ENCODE measurements at regions of chr12 and their contacts with region 1.

Region 1: DNA sequence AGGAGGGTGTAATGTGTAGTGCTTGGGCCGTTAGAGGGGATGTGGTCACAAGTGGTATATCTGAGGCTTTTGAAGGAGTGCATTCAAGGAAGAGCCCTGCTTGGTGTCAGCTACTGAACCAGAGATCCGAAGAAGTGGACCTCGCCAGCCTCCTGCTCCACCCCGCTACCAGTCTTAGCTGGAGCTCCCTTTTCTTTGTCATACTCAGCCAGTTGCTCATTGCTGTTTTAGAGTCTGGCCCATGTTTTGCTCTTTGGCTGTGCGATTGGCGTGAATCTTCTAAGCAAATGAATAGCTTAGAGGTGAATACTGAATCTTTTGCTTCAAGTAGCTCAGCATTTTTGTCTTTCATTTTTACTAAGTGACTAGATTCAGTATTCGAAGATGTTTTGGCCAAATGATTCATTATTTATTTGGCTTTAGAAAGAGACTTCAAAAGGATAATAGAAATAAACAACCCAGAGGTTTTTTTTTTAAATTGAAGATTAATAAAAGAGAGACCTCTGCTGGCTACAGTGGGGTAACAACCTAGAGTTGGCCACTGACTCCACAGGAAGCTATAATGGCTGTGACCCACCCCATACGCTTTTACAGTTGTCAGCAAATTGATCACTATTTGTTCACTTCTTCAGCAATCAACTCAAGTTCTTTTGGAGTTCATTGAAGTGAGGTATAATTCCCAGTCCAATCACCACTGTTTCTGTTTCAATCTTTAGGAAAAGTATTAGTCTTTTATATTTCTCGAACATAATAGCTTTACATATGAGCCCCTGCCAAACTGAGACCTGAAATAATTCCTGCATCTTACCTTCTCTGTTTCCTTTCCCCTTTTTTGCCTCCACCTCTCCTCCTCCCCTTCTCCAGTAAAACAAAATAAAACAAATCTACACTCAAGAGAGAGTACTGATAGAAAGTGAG is 19.9 kb downstream of the CDKN1B start:
- DNase-seq: peak; percentile 50
- ATAC-seq: peak; percentile 87 to 93
- H3K4me3 ChIP-seq: no peak overlapping the region
- H3K27ac ChIP-seq: peak overlapping the region in 1 of 2 experiments; percentile 31; a peak in 1 of 6 replicates
- H3K4me1 ChIP-seq: peaks cover 4% of the 10 kb centered on the region; the same call in 1 of the 3 replicates
- CTCF ChIP-seq: peak; percentile 63
- EP300 ChIP-seq: no peak
- POLR2A ChIP-seq: no peak
- RAD21 ChIP-seq: peak; percentile 49 to 65

Region 2: DNA sequence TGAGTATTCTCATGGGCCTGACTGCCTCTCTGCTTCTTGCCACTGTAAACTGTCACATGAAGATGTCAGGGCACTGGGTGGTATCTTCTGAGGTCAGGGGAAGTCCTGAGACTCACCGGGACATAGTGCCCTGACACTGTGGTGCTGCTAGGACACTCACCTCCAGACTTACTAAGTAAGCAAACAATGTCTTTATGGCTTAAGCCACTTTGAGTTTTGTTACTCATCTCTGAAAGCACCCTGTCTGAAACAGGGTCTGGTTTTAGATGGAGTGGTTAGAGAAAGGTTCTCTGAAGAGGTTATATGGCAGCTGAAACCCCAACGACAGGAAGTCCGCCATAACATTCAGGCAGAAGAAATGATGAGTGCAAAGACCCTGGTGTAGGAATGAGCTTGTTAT is 63.7 kb before region 1 on chr12:
- CTCF ChIA-PET with region 1: no interaction called
- POLR2A ChIA-PET with region 1: no interaction called
- DNase-seq: no peak
- ATAC-seq: peak in 1 of 2 experiments; percentile 30; a peak in 1 of 6 replicates
- H3K4me3 ChIP-seq: no peak overlapping the region
- H3K27ac ChIP-seq: no peak overlapping the region
- H3K4me1 ChIP-seq: peaks cover 41% of the 10 kb centered on the region
- CTCF ChIP-seq: no peak
- EP300 ChIP-seq: no peak
- POLR2A ChIP-seq: no peak
- RAD21 ChIP-seq: no peak

Region 3: GRCh38 chr12:12716793-12717585 is 20.0 kb before region 1 on chr12 and contains the start of gene CDKN1B:
- CTCF ChIA-PET with region 1: interaction called, 18 read pairs
- POLR2A ChIA-PET with region 1: interaction called, 3 read pairs
- DNase-seq: peak; percentile 88 to 92
- ATAC-seq: peak; percentile 81 to 88
- H3K4me3 ChIP-seq: peak within 1 kb of the TSS; percentile 87
- H3K27ac ChIP-seq: peak within 1 kb of the TSS; percentile 96 to 98
- H3K4me1 ChIP-seq: peaks cover 53% of the 10 kb centered on the region
- CTCF ChIP-seq: no peak
- EP300 ChIP-seq: no peak
- POLR2A ChIP-seq: peak; percentile 37; the same call in 1 of the 2 replicates
- RAD21 ChIP-seq: no peak
- polyA plus RNA-seq, gene CDKN1B: 20.4 and 26.8 TPM in 2 replicates

Region 4: GRCh38 chr12:12724661-12725545 is 12.1 kb before region 1 on chr12:
- CTCF ChIA-PET with region 1: interaction called, 20 read pairs
- POLR2A ChIA-PET with region 1: interaction called, 13 read pairs
- DNase-seq: peak; percentile 97 to 100
- ATAC-seq: peak; percentile 77 to 85
- H3K4me3 ChIP-seq: peak overlapping the region; percentile 87
- H3K27ac ChIP-seq: peak overlapping the region; percentile 96 to 99
- H3K4me1 ChIP-seq: peaks cover 33% of the 10 kb centered on the region
- CTCF ChIP-seq: no peak
- EP300 ChIP-seq: no peak
- POLR2A ChIP-seq: peak; percentile 56; the same call in 1 of the 2 replicates
- RAD21 ChIP-seq: peak in 1 of 2 experiments; percentile 11; a peak in 1 of 5 replicates

Region 5: DNA sequence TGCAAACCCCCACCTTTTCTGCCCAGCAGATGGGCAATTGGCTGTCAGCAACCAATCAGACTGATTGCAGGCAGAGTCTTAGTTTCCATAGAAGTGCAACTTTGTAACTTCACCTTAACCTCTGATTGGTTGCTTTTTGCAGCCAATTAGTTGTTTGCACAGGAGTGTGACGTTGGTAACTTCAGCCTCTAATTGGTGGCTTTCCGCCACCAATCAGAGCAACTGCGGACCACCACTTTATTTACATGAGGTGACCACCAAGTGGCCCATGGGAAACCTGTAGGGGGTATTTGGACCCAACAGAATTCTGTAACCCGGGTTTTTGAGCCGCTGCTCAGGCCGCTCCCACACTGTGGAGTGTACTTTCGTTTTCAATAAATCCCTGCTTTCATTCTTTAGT is 12.4 kb after region 1 on chr12:
- CTCF ChIA-PET with region 1: interaction called, 32 read pairs
- POLR2A ChIA-PET with region 1: no interaction called
- DNase-seq: peak in 1 of 2 experiments; percentile 9
- ATAC-seq: no peak
- H3K4me3 ChIP-seq: no peak overlapping the region
- H3K27ac ChIP-seq: no peak overlapping the region
- H3K4me1 ChIP-seq: peaks cover 7% of the 10 kb centered on the region; the same call in 1 of the 3 replicates
- CTCF ChIP-seq: no peak
- EP300 ChIP-seq: no peak
- POLR2A ChIP-seq: no peak
- RAD21 ChIP-seq: no peak

Region 6: DNA sequence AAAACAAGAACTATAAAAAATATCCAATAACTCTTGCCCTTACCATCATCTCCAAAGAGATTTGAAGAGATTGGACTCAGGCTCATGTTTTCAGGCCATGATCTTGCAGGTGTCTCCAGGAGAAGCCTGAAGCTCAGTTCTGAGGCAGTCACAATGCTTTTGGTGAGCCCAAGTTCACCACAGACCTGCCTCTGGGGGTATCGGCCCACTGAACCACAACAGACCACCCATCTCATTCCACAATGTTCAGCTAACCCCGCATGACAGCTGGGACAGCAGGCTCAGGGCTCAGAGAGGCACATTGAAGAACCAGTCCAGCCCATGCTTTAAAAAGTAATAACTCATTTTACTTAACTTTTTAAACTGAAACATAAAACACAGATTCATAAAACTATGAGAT is 20.1 kb after region 1 on chr12:
- CTCF ChIA-PET with region 1: interaction called, 11 read pairs
- POLR2A ChIA-PET with region 1: no interaction called
- DNase-seq: no peak
- ATAC-seq: no peak
- H3K4me3 ChIP-seq: no peak overlapping the region
- H3K27ac ChIP-seq: no peak overlapping the region
- H3K4me1 ChIP-seq: peaks cover 12% of the 10 kb centered on the region; the same call in 2 of the 3 replicates
- CTCF ChIP-seq: no peak
- EP300 ChIP-seq: no peak
- POLR2A ChIP-seq: no peak
- RAD21 ChIP-seq: no peak

Measured in A549 (cell line).